Activated CD8-positive, alpha-beta T cell treated with anti-CD3 and anti-CD28 coated beads, Interleukin-2, amount 10 ng/mL, durations not matched to agents 7 days and 5 days (primary cell): ENCODE measurements at regions of chr10 and their contacts with region 1.

Region 1: DNA sequence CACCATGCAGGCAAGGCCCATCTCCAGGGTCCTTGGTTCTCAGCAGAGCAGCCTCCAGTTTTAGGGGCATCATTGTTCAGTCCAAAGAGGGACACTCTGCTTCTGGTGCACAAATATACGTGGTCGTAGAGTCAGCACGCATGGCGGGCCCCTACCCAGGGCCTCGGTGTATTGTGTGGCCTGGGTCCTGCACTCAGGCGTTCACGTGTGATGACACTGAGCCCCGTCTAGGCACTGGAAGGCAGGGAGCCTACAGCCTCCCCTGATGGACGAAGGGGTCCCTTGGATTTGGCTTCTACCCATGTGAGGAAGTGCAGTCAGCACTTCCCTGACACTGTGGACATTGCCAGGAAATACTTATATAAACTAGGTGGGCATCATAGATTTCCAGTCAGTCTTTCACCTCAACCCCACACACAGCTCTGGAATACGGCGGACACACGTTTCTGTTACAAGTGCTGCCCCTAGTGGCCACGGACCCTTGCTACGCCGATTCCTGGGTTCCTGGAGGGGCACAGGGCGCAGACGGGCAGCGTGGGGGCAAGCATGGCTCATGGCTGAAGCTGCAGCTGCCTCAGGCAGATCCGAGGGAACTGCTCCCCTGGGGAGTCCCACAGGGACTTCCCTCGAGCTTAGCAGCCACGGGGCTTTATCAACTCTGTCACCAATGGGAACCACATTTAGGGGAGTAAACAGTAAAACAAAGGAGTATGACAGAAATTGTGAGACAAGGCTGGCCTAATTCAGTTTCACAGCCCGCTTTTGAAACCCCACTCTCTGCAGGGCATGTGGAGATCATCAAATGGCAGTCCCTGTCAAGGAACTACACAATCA is 25.4 kb downstream of the AIFM2 start:
- DNase-seq: no peak
- ATAC-seq: no peak
- H3K4me3 Mint-ChIP-seq: no peak overlapping the region
- H3K27ac Mint-ChIP-seq: no peak overlapping the region
- H3K4me1 Mint-ChIP-seq: peaks cover 25% of the 10 kb centered on the region
- H3K27me3 Mint-ChIP-seq: no peaks in the 10 kb centered on the region

Region 2: GRCh38 chr10:70067586-70067985 is 39.6 kb before region 1 on chr10:
- CTCF ChIA-PET with region 1: no interaction called
- POLR2A ChIA-PET with region 1: no interaction called
- DNase-seq: no peak
- ATAC-seq: no peak
- H3K4me3 Mint-ChIP-seq: no peak overlapping the region
- H3K27ac Mint-ChIP-seq: no peak overlapping the region
- H3K4me1 Mint-ChIP-seq: no peaks in the 10 kb centered on the region
- H3K27me3 Mint-ChIP-seq: peaks cover 7% of the 10 kb centered on the region

Region 3: DNA sequence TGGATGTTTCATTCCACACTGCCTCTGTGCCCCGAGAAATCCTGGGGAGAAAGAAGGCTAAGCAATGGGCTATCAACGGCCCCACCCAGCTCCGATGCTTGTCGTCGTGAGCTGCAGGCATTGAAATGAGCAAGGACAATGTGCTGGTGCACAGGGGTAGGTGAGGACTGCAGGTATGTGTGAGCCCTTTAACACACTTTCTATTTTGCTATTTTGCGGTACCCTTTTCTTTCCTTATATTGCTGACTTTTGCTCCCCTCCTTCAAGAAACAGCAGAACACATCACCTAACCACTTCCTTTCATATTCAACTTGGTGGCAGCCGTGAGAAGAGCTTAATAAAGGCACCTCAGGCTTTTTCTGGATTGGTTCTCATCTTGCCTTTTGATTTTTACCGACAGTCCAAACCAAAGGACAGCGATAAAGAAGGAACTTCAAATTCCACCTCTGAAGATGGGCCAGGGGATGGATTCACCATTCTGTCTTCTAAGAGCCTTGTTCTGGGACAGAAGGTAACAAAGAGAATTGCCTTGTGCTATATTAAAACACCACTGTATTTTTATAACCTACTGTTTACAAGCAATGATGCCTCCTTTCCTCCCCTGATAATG is 13.7 kb before region 1 on chr10:
- CTCF ChIA-PET with region 1: interaction called, 24 read pairs
- POLR2A ChIA-PET with region 1: interaction called, 4 read pairs
- DNase-seq: peak; percentile 63
- ATAC-seq: peak; percentile 80
- H3K4me3 Mint-ChIP-seq: peak overlapping the region; percentile 78
- H3K27ac Mint-ChIP-seq: peak overlapping the region; percentile 86
- H3K4me1 Mint-ChIP-seq: peaks cover 46% of the 10 kb centered on the region
- H3K27me3 Mint-ChIP-seq: no peaks in the 10 kb centered on the region